H1 (cell line): ENCODE measurements at regions of chr15 and their contacts with region 1.

Region 1: DNA sequence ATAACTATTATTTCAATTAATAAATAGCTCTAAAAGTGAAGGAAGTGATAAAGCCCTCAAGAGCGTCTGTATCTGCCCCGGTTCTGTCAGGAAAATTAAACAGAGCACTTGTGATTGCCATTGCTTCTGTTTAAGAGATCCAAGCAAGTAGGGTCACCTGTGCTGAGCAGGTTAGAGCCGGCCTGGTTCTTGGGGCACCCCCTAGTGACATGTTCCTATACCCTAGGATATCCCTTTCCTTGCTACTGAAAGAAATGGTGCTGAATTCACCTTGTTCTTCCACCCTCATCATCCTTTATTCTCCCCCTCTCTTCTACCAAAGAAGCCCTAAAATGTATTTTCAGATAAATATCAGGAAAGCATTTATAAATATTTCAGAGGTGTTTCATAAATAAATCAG is 323.5 kb downstream of the RORA start:
- DNase-seq: no peak
- H3K4me3 ChIP-seq: no peak overlapping the region
- H3K27ac ChIP-seq: no peak overlapping the region
- H3K4me1 ChIP-seq: peaks cover 0 to 6% (median 2%) of the 10 kb centered on the region in 4 experiments; a peak in 3 of 7 replicates
- H3K27me3 ChIP-seq: no peaks in the 10 kb centered on the region
- CTCF ChIP-seq: peak; percentile 47 to 52 (median 48)
- EP300 ChIP-seq: no peak
- POLR2A ChIP-seq: no peak
- RAD21 ChIP-seq: peak; percentile 64 to 77

Region 2: GRCh38 chr15:60592371-60593169 is 313.0 kb before region 1 on chr15:
- CTCF ChIA-PET with region 1: interaction called, 10 read pairs
- POLR2A ChIA-PET with region 1: no interaction called
- DNase-seq: peak in 1 of 2 experiments; percentile 81
- H3K4me3 ChIP-seq: peak overlapping the region; percentile 79 to 82 (median 80)
- H3K27ac ChIP-seq: no peak overlapping the region
- H3K4me1 ChIP-seq: peaks cover 0 to 5% (median 2%) of the 10 kb centered on the region in 4 experiments; a peak in 2 of 7 replicates
- H3K27me3 ChIP-seq: peaks cover 0 to 7% (median 0%) of the 10 kb centered on the region in 4 experiments; a peak in 2 of 7 replicates
- CTCF ChIP-seq: peak; percentile 7 to 15 (median 9); a peak in 3 of 4 replicates
- EP300 ChIP-seq: no peak
- POLR2A ChIP-seq: peak in 1 of 2 experiments; percentile 72; a peak in 2 of 3 replicates
- RAD21 ChIP-seq: peak in 1 of 2 experiments; percentile 11; a peak in 2 of 4 replicates

Region 3: GRCh38 chr15:60859996-60860494 is 45.5 kb before region 1 on chr15:
- CTCF ChIA-PET with region 1: interaction called, 11 read pairs
- POLR2A ChIA-PET with region 1: no interaction called
- DNase-seq: no peak
- H3K4me3 ChIP-seq: no peak overlapping the region
- H3K27ac ChIP-seq: no peak overlapping the region
- H3K4me1 ChIP-seq: no peaks in the 10 kb centered on the region; a peak in 2 of 7 replicates
- H3K27me3 ChIP-seq: no peaks in the 10 kb centered on the region
- CTCF ChIP-seq: no peak
- EP300 ChIP-seq: no peak
- POLR2A ChIP-seq: no peak
- RAD21 ChIP-seq: no peak

Region 4: DNA sequence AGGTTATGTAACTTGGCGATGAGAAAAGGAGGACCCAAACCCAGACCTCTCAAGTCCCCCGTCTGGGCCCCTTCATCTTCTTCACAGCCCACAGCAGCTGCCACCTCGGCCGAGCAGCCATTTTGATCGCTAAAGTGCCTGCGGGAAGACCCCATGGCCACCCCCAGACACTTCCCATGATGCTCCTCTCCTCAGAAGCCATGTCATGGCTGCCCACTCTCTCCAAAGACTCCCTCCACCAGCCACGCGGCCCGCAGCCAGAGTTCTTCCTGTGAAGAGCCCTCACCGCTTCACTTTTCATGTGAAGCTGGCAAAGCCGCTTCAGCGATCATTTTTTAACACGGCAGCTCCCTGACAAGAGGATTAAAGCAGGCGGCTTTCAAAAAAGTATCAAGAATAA is 11.7 kb before region 1 on chr15:
- CTCF ChIA-PET with region 1: interaction called, 12 read pairs
- POLR2A ChIA-PET with region 1: no interaction called
- DNase-seq: no peak
- H3K4me3 ChIP-seq: no peak overlapping the region
- H3K27ac ChIP-seq: no peak overlapping the region
- H3K4me1 ChIP-seq: no peaks in the 10 kb centered on the region; a peak in 1 of 7 replicates
- H3K27me3 ChIP-seq: no peaks in the 10 kb centered on the region
- CTCF ChIP-seq: no peak
- EP300 ChIP-seq: no peak
- POLR2A ChIP-seq: no peak
- RAD21 ChIP-seq: no peak

Region 5: GRCh38 chr15:61186905-61187741 is 281.5 kb after region 1 on chr15:
- CTCF ChIA-PET with region 1: no interaction called
- POLR2A ChIA-PET with region 1: no interaction called
- DNase-seq: no peak
- H3K4me3 ChIP-seq: no peak overlapping the region
- H3K27ac ChIP-seq: no peak overlapping the region
- H3K4me1 ChIP-seq: no peaks in the 10 kb centered on the region
- H3K27me3 ChIP-seq: no peaks in the 10 kb centered on the region
- CTCF ChIP-seq: no peak
- EP300 ChIP-seq: no peak
- POLR2A ChIP-seq: no peak
- RAD21 ChIP-seq: no peak